ENCODE measurements at regions of chr19 and their contacts with region 1.

Region 1: DNA sequence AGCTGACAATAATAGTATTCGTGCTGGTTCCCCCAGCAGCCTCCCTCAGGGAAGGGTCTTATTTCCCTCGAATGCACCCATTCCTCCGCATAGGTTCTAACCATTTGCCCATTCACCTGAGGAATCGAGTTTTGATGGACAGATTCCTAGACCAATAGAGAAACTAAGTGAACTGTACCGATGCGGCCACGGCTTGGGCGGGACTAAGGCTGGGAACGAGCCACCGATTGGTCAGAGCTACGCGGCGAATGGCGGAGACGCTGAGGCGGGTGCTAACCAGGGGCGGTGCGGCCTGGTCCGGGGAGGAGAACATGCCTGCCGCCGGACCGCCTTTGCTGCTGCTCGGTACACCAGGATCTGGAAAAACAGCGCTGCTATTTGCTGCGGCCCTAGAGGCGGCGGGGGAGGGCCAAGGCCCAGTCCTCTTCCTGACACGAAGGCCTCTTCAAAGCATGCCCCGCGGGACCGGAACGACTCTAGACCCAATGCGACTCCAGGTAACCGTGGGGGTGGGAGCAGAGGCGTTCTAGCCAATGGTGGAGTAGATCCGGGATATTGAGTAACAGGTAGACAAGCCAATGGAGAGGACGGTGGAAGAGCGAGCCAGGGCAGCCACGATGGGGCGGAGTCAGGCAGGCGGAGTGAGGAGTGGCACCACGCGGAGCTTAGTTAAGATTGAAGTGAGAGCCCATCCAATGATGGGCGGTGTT is at the start of gene SWSAP1:
- DNase-seq: peak; percentile 100
- H3K4me3 ChIP-seq: peak within 1 kb of the TSS; percentile 35 to 65 (median 56)
- H3K27ac ChIP-seq: peak within 1 kb of the TSS; percentile 70
- H3K4me1 ChIP-seq: peaks cover 39% of the 10 kb centered on the region
- H3K27me3 ChIP-seq: no peaks in the 10 kb centered on the region
- CTCF ChIP-seq: no peak
- POLR2A ChIP-seq: peak; percentile 68
- total RNA-seq, gene SWSAP1: 2.7 and 3.7 TPM in 2 replicates

Region 2: GRCh38 chr19:11339254-11340098 is 35.1 kb before region 1 on chr19 and contains the start of gene RAB3D:
- CTCF ChIA-PET with region 1: interaction called, 6 read pairs
- POLR2A ChIA-PET with region 1: interaction called, 4 read pairs
- dilution Hi-C with region 1: no loop called
- intact Hi-C with region 1: loop called (anchors 2 kb)
- DNase-seq: peak; percentile 88
- H3K4me3 ChIP-seq: peak within 1 kb of the TSS; percentile 43 to 91 (median 52)
- H3K27ac ChIP-seq: no peak within 1 kb of the TSS
- H3K4me1 ChIP-seq: peaks cover 16% of the 10 kb centered on the region
- H3K27me3 ChIP-seq: no peaks in the 10 kb centered on the region
- CTCF ChIP-seq: no peak
- POLR2A ChIP-seq: peak; percentile 54
- total RNA-seq, gene RAB3D: 41.1 and 48.2 TPM in 2 replicates